Ascending aorta (tissue), 2 donors: ENCODE measurements at regions of chr2 and their contacts with region 1.

Region 1: GRCh38 chr2:111120253-111121027 is at the start of gene BCL2L11:
- DNase-seq: peak; percentile 61 to 93
- H3K4me3 ChIP-seq: peak within 1 kb of the TSS; percentile 87 to 89
- H3K27ac ChIP-seq: peak within 1 kb of the TSS; percentile 69 to 72
- H3K4me1 ChIP-seq: peaks cover 0 to 17% of the 10 kb centered on the region in 2 donors
- H3K27me3 ChIP-seq: no peaks in the 10 kb centered on the region
- CTCF ChIP-seq: peak in 2 of 3 experiments; percentile 19 to 23
- total RNA-seq, gene BCL2L11: 3.5 TPM

Region 2: DNA sequence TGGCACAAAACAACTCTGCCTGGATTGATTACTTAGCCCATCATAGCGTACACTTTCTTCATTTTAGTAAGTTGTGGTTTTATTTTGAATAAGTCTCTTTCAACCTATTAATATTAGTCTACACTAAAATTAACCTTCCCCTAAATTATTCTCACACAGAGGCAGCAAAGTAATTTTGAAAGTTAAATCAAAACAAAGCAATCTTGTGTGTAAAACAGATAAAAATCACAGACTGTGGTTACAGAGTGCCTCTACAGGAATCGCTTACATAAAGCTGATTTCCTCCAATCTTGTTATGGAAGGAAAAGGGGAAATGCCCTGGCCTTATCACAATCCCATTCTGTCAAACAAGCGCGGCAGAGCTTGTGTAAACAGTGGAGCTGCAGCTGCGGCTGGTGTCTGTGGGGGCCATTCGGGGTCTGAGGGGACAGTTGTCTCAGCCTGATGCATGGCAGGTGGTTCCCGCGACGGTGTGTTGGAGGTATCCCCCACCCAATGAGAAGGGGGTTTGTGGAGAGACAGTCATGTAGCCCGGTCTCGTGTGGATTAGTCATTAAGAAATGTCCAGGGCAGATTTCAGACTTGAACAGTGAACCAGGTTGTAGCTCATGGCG is 42.4 kb after region 1 on chr2:
- intact Hi-C with region 1: loop called (anchors 5 kb)
- DNase-seq: no peak
- H3K4me3 ChIP-seq: no peak overlapping the region
- H3K27ac ChIP-seq: no peak overlapping the region
- H3K4me1 ChIP-seq: peaks cover 9 to 21% of the 10 kb centered on the region in 2 donors
- H3K27me3 ChIP-seq: no peaks in the 10 kb centered on the region
- CTCF ChIP-seq: no peak

Region 3: GRCh38 chr2:111659416-111660281 is 539.2 kb after region 1 on chr2:
- intact Hi-C with region 1: loop called (anchors 2 kb)
- DNase-seq: peak; percentile 39 to 88
- H3K4me3 ChIP-seq: no peak overlapping the region
- H3K27ac ChIP-seq: peak overlapping the region; percentile 73 to 92
- H3K4me1 ChIP-seq: peaks cover 7 to 13% of the 10 kb centered on the region in 2 donors
- H3K27me3 ChIP-seq: no peaks in the 10 kb centered on the region
- CTCF ChIP-seq: no peak

Region 4: GRCh38 chr2:111667542-111668273 is 547.3 kb after region 1 on chr2:
- intact Hi-C with region 1: loop called (anchors 1 kb)
- DNase-seq: peak in 1 of 2 donors; percentile 69
- H3K4me3 ChIP-seq: no peak overlapping the region
- H3K27ac ChIP-seq: no peak overlapping the region
- H3K4me1 ChIP-seq: no peaks in the 10 kb centered on the region
- H3K27me3 ChIP-seq: no peaks in the 10 kb centered on the region
- CTCF ChIP-seq: peak; percentile 51 to 62 (median 54)

Region 5: DNA sequence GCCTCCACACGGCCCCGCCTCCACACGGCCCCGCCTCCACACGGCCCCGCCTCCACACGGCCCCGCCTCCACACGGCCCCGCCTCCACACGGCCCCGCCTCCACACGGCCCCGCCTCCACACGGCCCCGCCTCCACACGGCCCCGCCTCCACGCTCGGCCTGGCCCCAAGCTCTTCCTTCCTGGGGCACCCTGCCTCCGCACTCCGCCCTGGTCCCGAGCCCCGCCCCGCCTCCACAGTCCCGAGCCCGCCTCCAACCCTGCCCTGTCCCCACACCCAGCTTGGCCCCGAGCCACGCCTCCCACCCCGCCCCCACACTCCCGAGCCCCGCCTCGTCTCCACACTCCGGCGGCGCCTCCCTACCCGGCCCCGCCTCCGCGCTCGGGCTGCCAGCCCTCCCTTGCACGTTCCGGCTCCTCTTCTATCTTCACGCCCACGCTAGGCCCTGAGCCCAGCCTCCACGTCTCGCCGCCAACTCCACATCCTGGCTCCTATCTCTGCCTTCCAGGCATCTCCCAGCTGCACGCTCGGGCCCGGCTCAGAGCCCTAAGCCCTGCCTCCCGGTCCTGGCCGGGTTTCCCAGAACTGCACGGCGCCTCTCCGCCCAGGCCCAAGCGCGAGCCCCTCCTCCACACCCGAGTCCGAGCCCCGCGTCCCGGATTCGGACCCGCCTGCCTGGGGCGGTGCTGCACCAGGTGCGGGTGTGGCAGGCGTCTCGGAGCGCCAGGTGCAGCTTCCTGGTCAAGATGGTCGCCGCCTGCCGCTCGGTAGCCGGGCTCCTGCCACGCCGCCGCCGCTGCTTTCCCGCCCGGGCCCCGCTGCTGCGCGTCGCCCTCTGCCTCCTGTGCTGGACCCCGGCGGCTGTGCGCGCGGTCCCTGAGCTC is 934.6 kb after region 1 on chr2 and contains the start of gene TMEM87B:
- intact Hi-C with region 1: loop called (anchors 2 kb)
- DNase-seq: peak; percentile 88 to 98
- H3K4me3 ChIP-seq: peak within 1 kb of the TSS; percentile 78 to 98
- H3K27ac ChIP-seq: peak within 1 kb of the TSS; percentile 96 to 98
- H3K4me1 ChIP-seq: peaks cover 0 to 21% of the 10 kb centered on the region in 2 donors
- H3K27me3 ChIP-seq: no peaks in the 10 kb centered on the region
- CTCF ChIP-seq: no peak
- total RNA-seq, gene TMEM87B: 11.7 TPM